Heart left ventricle (tissue), 16 donors: ENCODE measurements at regions of chr2 and their contacts with region 1.

Region 1: GRCh38 chr2:154623819-154624218 is 74.7 kb upstream of the KCNJ3 start:
- DNase-seq: peak in 2 of 5 donors; percentile 16 to 18
- ATAC-seq: peak in 1 of 4 donors; percentile 52
- H3K4me3 ChIP-seq: no peak overlapping the region
- H3K27ac ChIP-seq: no peak overlapping the region
- H3K4me1 ChIP-seq: no peaks in the 10 kb centered on the region
- H3K27me3 ChIP-seq: no peaks in the 10 kb centered on the region
- CTCF ChIP-seq: peak; percentile 38 to 75 (median 52)
- POLR2A ChIP-seq: no peak

Region 2: GRCh38 chr2:154452906-154453493 is 170.8 kb before region 1 on chr2:
- intact Hi-C with region 1: loop called in 7 of 10 experiments (anchors 5 to 10 kb)
- DNase-seq: no peak
- ATAC-seq: peak in 1 of 4 donors; percentile 28
- H3K4me3 ChIP-seq: no peak overlapping the region
- H3K27ac ChIP-seq: no peak overlapping the region
- H3K4me1 ChIP-seq: peaks cover 0 to 13% (median 0%) of the 10 kb centered on the region in 12 donors
- H3K27me3 ChIP-seq: no peaks in the 10 kb centered on the region
- CTCF ChIP-seq: peak; percentile 18 to 64 (median 50)
- POLR2A ChIP-seq: no peak

Region 3: DNA sequence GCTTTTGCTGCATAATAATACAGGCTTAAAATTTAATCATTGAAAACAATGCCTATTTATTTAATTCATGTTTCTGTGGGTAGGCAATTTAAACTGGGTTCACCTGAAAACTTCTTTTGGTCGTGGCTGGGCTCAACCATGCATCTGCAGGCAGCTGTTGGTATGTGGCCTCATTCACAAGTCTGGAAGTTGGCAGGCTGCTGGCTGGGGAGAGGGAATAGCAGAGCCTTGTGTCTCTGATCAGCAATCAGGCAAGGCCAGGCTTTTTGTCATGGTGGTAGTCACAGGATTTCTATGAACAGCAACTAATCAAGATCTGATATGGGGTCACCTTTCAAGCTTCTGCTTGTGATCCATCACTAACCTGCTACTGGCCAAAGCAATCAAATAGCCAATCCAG is 55.4 kb before region 1 on chr2:
- intact Hi-C with region 1: no loop called
- DNase-seq: no peak
- ATAC-seq: no peak
- H3K4me3 ChIP-seq: no peak overlapping the region
- H3K27ac ChIP-seq: no peak overlapping the region
- H3K4me1 ChIP-seq: no peaks in the 10 kb centered on the region
- H3K27me3 ChIP-seq: no peaks in the 10 kb centered on the region
- CTCF ChIP-seq: no peak
- POLR2A ChIP-seq: no peak

Region 4: GRCh38 chr2:155235710-155236109 is 611.9 kb after region 1 on chr2:
- intact Hi-C with region 1: loop called in 1 of 10 experiments (anchors 10 kb)
- DNase-seq: no peak
- ATAC-seq: no peak
- H3K4me3 ChIP-seq: no peak overlapping the region
- H3K27ac ChIP-seq: no peak overlapping the region
- H3K4me1 ChIP-seq: no peaks in the 10 kb centered on the region
- H3K27me3 ChIP-seq: no peaks in the 10 kb centered on the region
- CTCF ChIP-seq: no peak
- POLR2A ChIP-seq: no peak